ENCODE measurements at regions of chr6 and their contacts with region 1.

Region 1: GRCh38 chr6:2931970-2932748 is 29.1 kb upstream of the SERPINB9 start:
- DNase-seq: peak; percentile 53 to 94 (median 87)

Region 2: GRCh38 chr6:2848851-2849250 is 83.3 kb before region 1 on chr6:
- intact Hi-C with region 1: loop called (anchors 5 kb)
- DNase-seq: no peak

Measured in head of caudate nucleus (tissue), 42 donors.